Mammary epithelial cell (primary cell): ENCODE measurements at regions of chr6 and their contacts with region 1.

Region 1: DNA sequence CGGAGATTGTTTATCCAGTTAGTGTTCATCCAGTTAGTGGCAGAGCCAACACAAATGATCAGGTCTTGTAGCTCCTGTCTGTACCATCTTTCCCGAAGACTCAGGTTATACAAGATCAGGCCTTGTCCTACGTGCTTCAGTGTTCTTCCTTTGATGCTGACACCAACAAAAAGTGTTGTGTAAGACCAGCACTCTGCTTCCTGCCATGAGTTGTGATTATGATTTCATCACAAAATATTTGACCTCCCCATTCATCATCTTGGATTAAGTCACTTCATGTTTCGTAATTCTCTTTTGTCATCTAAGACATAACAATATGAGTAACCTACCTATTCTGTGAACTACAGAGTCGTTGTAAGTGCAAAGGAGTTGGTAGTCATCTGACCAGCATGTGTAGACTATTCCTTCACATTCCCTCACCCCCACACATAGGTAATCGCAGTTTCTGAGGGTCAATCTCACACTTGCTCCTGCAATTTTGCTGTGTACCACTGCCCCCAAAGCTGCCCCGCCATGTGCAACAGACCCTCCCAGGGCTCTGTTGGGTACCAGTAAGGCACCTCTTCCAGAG is 135.6 kb upstream of the SLC22A23 start:
- DNase-seq: peak; percentile 100
- H3K4me3 ChIP-seq: no peak overlapping the region
- H3K27ac ChIP-seq: peak overlapping the region; percentile 88
- H3K4me1 ChIP-seq: peaks cover 18% of the 10 kb centered on the region
- H3K27me3 ChIP-seq: no peaks in the 10 kb centered on the region
- CTCF ChIP-seq: no peak

Region 2: GRCh38 chr6:3068329-3069214 is 523.9 kb before region 1 on chr6 and contains the start of gene RIPK1:
- CTCF ChIA-PET with region 1: no interaction called
- dilution Hi-C with region 1: no loop called
- in situ Hi-C with region 1: no loop called
- intact Hi-C with region 1: no loop called
- DNase-seq: peak; percentile 90
- H3K4me3 ChIP-seq: peak within 1 kb of the TSS; percentile 66 to 84 (median 75)
- H3K27ac ChIP-seq: peak within 1 kb of the TSS; percentile 84
- H3K4me1 ChIP-seq: peaks cover 7% of the 10 kb centered on the region
- H3K27me3 ChIP-seq: no peaks in the 10 kb centered on the region
- CTCF ChIP-seq: peak in 1 of 2 donors; percentile 49
- total RNA-seq, gene RIPK1: 21.1 to 26.8 TPM

Region 3: GRCh38 chr6:3403238-3404173 is 188.9 kb before region 1 on chr6:
- CTCF ChIA-PET with region 1: no interaction called
- dilution Hi-C with region 1: no loop called
- in situ Hi-C with region 1: no loop called
- intact Hi-C with region 1: loop called (anchors 5 kb)
- DNase-seq: peak; percentile 81
- H3K4me3 ChIP-seq: no peak overlapping the region
- H3K27ac ChIP-seq: peak overlapping the region; percentile 85
- H3K4me1 ChIP-seq: peaks cover 33% of the 10 kb centered on the region
- H3K27me3 ChIP-seq: no peaks in the 10 kb centered on the region
- CTCF ChIP-seq: no peak

Region 4: GRCh38 chr6:3612341-3613041 is 20.0 kb after region 1 on chr6:
- CTCF ChIA-PET with region 1: no interaction called
- dilution Hi-C with region 1: no loop called
- in situ Hi-C with region 1: no loop called
- intact Hi-C with region 1: loop called (anchors 1 kb)
- DNase-seq: peak; percentile 95
- H3K4me3 ChIP-seq: no peak overlapping the region
- H3K27ac ChIP-seq: peak overlapping the region; percentile 69
- H3K4me1 ChIP-seq: peaks cover 31% of the 10 kb centered on the region
- H3K27me3 ChIP-seq: no peaks in the 10 kb centered on the region
- CTCF ChIP-seq: no peak

Region 5: GRCh38 chr6:3687847-3688246 is 95.4 kb after region 1 on chr6:
- CTCF ChIA-PET with region 1: interaction called, 12 read pairs
- dilution Hi-C with region 1: no loop called
- in situ Hi-C with region 1: no loop called
- intact Hi-C with region 1: no loop called
- DNase-seq: no peak
- H3K4me3 ChIP-seq: no peak overlapping the region
- H3K27ac ChIP-seq: no peak overlapping the region
- H3K4me1 ChIP-seq: no peaks in the 10 kb centered on the region
- H3K27me3 ChIP-seq: no peaks in the 10 kb centered on the region
- CTCF ChIP-seq: no peak